Transverse colon (tissue), 4 donors: ENCODE measurements at regions of chr11 and their contacts with region 1.

Region 1: DNA sequence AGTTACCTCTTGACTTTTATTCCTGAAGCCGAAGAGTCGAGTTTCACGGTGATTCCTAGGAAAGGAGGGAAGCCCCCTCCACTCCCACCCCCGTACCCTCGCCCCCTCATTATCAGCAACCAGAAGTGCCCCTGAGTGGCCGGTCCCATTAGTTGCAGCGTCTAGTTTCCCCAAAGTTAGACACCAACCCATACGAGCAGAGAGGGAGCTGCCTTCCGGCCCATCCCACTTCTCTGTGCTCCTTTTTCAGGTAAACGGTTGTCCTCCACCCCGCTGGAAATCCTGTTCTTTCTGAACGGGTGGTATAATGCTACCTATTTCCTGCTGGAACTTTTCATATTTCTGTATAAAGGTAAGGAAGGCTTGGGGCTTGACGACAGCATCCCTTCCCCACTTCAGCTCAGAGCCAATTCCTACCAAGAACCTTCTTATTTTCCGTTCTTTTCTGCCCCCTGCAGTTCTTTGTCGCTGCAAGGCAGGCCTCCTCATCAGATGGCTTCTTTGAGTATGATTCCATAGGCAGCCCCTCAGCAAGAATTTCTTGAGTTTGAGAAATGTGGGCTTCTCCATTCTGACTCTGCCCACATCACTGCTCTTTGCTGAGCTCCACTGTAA is 701 bp downstream of the TMEM216 start:
- DNase-seq: no peak
- H3K4me3 ChIP-seq: peak overlapping the region; percentile 30 to 86 (median 69)
- H3K27ac ChIP-seq: peak overlapping the region; percentile 83 to 88 (median 86)
- H3K4me1 ChIP-seq: peaks cover 4 to 17% (median 14%) of the 10 kb centered on the region in 4 donors
- H3K27me3 ChIP-seq: no peaks in the 10 kb centered on the region
- CTCF ChIP-seq: no peak
- EP300 ChIP-seq: no peak
- POLR2A ChIP-seq: no peak

Region 2: DNA sequence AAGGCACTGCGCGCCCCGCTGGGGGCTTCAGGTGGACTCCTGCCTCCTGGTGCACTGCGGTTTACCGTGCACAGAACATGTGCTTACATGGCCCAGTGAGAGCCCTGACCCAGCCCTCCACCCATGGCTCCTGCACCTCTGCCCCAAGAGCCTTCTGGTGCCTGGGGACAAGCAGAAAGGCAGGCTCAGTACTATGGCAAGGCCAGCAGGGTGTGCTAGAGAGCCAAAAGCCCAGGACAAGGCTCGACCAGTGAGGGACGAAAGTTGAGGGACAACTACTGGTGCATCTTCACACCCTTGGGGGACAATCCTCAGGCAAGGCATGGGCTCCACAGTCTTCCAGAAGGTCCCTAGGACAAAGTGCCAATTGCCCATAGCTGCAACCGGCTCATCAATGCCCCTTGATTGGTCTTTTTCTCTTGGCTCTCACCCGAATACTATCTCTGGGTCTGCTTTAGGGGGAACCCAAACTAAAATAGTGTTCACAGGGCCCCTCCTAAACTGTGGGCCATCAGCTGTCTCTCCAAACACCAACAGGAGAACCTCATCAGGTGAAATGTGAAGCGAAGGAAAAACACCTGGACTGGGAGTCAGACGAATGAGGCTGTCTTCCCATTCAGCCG is 138.6 kb before region 1 on chr11:
- in situ Hi-C with region 1: loop called in 1 of 4 experiments (anchors 25 kb)
- intact Hi-C with region 1: no loop called
- DNase-seq: peak; percentile 70
- H3K4me3 ChIP-seq: no peak overlapping the region
- H3K27ac ChIP-seq: no peak overlapping the region
- H3K4me1 ChIP-seq: no peaks in the 10 kb centered on the region
- H3K27me3 ChIP-seq: no peaks in the 10 kb centered on the region
- CTCF ChIP-seq: peak; percentile 65 to 87 (median 84)
- EP300 ChIP-seq: no peak
- POLR2A ChIP-seq: no peak

Region 3: DNA sequence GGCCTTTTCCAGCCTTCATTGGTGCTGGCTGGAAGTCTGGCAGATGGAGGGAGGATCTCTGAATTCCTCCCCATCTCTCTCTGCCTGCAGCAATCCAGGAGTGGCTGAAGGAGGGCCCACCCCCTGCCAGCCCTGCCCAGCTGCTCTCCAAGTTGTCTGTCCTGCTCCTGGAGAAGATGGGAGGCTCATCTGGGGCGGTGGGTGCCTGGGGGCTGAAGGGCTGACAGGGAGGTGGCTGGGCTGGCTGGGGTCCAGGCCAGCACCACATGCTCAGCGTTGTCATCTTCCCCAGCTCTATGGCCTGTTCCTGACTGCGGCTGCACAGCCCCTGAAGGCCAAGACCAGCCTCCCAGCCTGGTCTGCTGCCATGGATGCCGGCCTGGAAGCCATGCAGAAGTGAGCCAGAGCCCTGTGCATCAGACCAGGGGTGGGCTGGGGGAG is 47.9 kb before region 1 on chr11:
- in situ Hi-C with region 1: no loop called
- intact Hi-C with region 1: no loop called
- DNase-seq: no peak
- H3K4me3 ChIP-seq: no peak overlapping the region
- H3K27ac ChIP-seq: no peak overlapping the region
- H3K4me1 ChIP-seq: peaks cover 0 to 14% (median 7%) of the 10 kb centered on the region in 4 donors
- H3K27me3 ChIP-seq: no peaks in the 10 kb centered on the region
- CTCF ChIP-seq: no peak
- EP300 ChIP-seq: no peak
- POLR2A ChIP-seq: no peak

Region 4: GRCh38 chr11:63042596-63042995 is 1649.5 kb after region 1 on chr11:
- in situ Hi-C with region 1: no loop called
- intact Hi-C with region 1: no loop called
- DNase-seq: no peak
- H3K4me3 ChIP-seq: no peak overlapping the region
- H3K27ac ChIP-seq: no peak overlapping the region
- H3K4me1 ChIP-seq: no peaks in the 10 kb centered on the region
- H3K27me3 ChIP-seq: no peaks in the 10 kb centered on the region
- CTCF ChIP-seq: no peak
- EP300 ChIP-seq: no peak
- POLR2A ChIP-seq: no peak